ENCODE measurements at regions of chr2 and their contacts with region 1.

Region 1: GRCh38 chr2:168920504-168921157 is 19.5 kb downstream of the G6PC2 start:
- DNase-seq: peak; percentile 38 to 79 (median 44)
- ATAC-seq: peak; percentile 84
- H3K4me3 ChIP-seq: no peak overlapping the region
- H3K27ac ChIP-seq: no peak overlapping the region
- H3K4me1 ChIP-seq: peaks cover 0 to 7% of the 10 kb centered on the region in 2 experiments; a peak in 1 of 5 replicates
- H3K27me3 ChIP-seq: no peaks in the 10 kb centered on the region
- CTCF ChIP-seq: peak; percentile 63 to 90 (median 67); a peak in 5 of 6 replicates
- EP300 ChIP-seq: no peak
- POLR2A ChIP-seq: no peak
- RAD21 ChIP-seq: peak; percentile 95 to 98

Region 2: GRCh38 chr2:168149150-168149974 is 771.3 kb before region 1 on chr2:
- CTCF ChIA-PET with region 1: no interaction called
- POLR2A ChIA-PET with region 1: no interaction called
- in situ Hi-C with region 1: no loop called
- intact Hi-C with region 1: loop called (anchors 10 kb)
- DNase-seq: no peak
- ATAC-seq: no peak
- H3K4me3 ChIP-seq: no peak overlapping the region
- H3K27ac ChIP-seq: no peak overlapping the region
- H3K4me1 ChIP-seq: no peaks in the 10 kb centered on the region
- H3K27me3 ChIP-seq: no peaks in the 10 kb centered on the region
- CTCF ChIP-seq: no peak
- EP300 ChIP-seq: no peak
- POLR2A ChIP-seq: no peak
- RAD21 ChIP-seq: no peak

Region 3: DNA sequence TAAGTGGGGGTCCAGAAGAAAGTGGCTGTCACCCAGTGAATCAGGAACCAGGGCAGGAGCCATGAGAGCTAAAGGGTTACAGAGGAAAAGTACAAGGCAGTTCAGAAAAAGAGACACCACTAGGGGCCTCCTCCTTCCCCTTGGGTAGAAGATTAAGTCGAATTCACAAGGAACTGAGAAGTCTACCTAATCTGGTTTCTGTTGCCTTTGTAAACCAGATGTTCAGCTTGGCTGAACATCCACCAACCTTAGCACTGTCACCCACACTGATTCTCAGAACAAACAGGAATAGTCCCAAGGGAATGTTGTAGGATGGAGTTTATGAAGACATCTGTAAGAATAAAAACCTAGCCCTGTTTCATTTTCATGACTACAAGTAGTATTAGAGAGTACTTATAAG is 208.6 kb before region 1 on chr2:
- CTCF ChIA-PET with region 1: no interaction called
- POLR2A ChIA-PET with region 1: no interaction called
- in situ Hi-C with region 1: no loop called
- intact Hi-C with region 1: loop called (anchors 5 kb)
- DNase-seq: peak in 3 of 4 experiments; percentile 13 to 56 (median 42)
- ATAC-seq: peak; percentile 94
- H3K4me3 ChIP-seq: no peak overlapping the region
- H3K27ac ChIP-seq: no peak overlapping the region
- H3K4me1 ChIP-seq: peaks cover 0 to 13% of the 10 kb centered on the region in 2 experiments; a peak in 3 of 5 replicates
- H3K27me3 ChIP-seq: no peaks in the 10 kb centered on the region
- CTCF ChIP-seq: peak; percentile 26 to 56 (median 43); a peak in 3 of 6 replicates
- EP300 ChIP-seq: no peak
- POLR2A ChIP-seq: no peak
- RAD21 ChIP-seq: peak; percentile 55 to 60

Measured in K562 (cell line).